CD4-positive, alpha-beta memory T cell (primary cell): ENCODE measurements at regions of chr14 and their contacts with region 1.

Region 1: GRCh38 chr14:24241829-24242443 is 487 bp downstream of the TINF2 start:
- DNase-seq: peak; percentile 96 to 98 (median 97)
- H3K4me3 ChIP-seq: peak overlapping the region; percentile 79 to 81
- H3K4me3 Mint-ChIP-seq: peak overlapping the region; percentile 87 to 99 (median 94)
- H3K27ac ChIP-seq: peak overlapping the region; percentile 96
- H3K27ac Mint-ChIP-seq: peak overlapping the region; percentile 99 to 100 (median 99)
- H3K4me1 ChIP-seq: peaks cover 55% of the 10 kb centered on the region
- H3K4me1 Mint-ChIP-seq: peaks cover 35 to 77% (median 57%) of the 10 kb centered on the region in 4 donors
- H3K27me3 ChIP-seq: no peaks in the 10 kb centered on the region
- H3K27me3 Mint-ChIP-seq: no peaks in the 10 kb centered on the region

Region 2: GRCh38 chr14:24080888-24081738 is 160.8 kb before region 1 on chr14:
- CTCF ChIA-PET with region 1: interaction called, 4 read pairs
- POLR2A ChIA-PET with region 1: interaction called, 10 read pairs
- intact Hi-C with region 1: no loop called
- DNase-seq: peak; percentile 64 to 77 (median 67)
- H3K4me3 ChIP-seq: peak overlapping the region; percentile 39 to 60
- H3K4me3 Mint-ChIP-seq: peak overlapping the region; percentile 81 to 90 (median 87)
- H3K27ac ChIP-seq: peak overlapping the region; percentile 50
- H3K27ac Mint-ChIP-seq: peak overlapping the region; percentile 64 to 92 (median 88)
- H3K4me1 ChIP-seq: peaks cover 14% of the 10 kb centered on the region
- H3K4me1 Mint-ChIP-seq: peaks cover 10 to 27% (median 15%) of the 10 kb centered on the region in 4 donors
- H3K27me3 ChIP-seq: no peaks in the 10 kb centered on the region
- H3K27me3 Mint-ChIP-seq: no peaks in the 10 kb centered on the region

Region 3: GRCh38 chr14:24135834-24136542 is 105.9 kb before region 1 on chr14 and contains the start of gene PSME1:
- CTCF ChIA-PET with region 1: interaction called, 3 read pairs
- POLR2A ChIA-PET with region 1: interaction called, 21 read pairs
- intact Hi-C with region 1: no loop called
- DNase-seq: peak; percentile 92 to 94 (median 93)
- H3K4me3 ChIP-seq: peak within 1 kb of the TSS; percentile 30 to 87
- H3K4me3 Mint-ChIP-seq: peak within 1 kb of the TSS; percentile 87 to 94 (median 92)
- H3K27ac ChIP-seq: peak within 1 kb of the TSS; percentile 84
- H3K27ac Mint-ChIP-seq: peak within 1 kb of the TSS; percentile 88 to 96 (median 94)
- H3K4me1 ChIP-seq: peaks cover 59% of the 10 kb centered on the region
- H3K4me1 Mint-ChIP-seq: peaks cover 35 to 70% (median 55%) of the 10 kb centered on the region in 4 donors
- H3K27me3 ChIP-seq: no peaks in the 10 kb centered on the region
- H3K27me3 Mint-ChIP-seq: no peaks in the 10 kb centered on the region
- total RNA-seq, gene PSME1: 257 to 273 TPM

Region 4: GRCh38 chr14:24195191-24196070 is 46.5 kb before region 1 on chr14 and contains the start of gene TM9SF1:
- CTCF ChIA-PET with region 1: interaction called, 12 read pairs
- POLR2A ChIA-PET with region 1: interaction called, 34 read pairs
- intact Hi-C with region 1: no loop called
- DNase-seq: peak; percentile 89 to 92 (median 92)
- H3K4me3 ChIP-seq: peak within 1 kb of the TSS; percentile 87 to 90
- H3K4me3 Mint-ChIP-seq: peak within 1 kb of the TSS; percentile 93 to 98 (median 94)
- H3K27ac ChIP-seq: peak within 1 kb of the TSS; percentile 98
- H3K27ac Mint-ChIP-seq: peak within 1 kb of the TSS; percentile 92 to 99 (median 98)
- H3K4me1 ChIP-seq: peaks cover 37% of the 10 kb centered on the region
- H3K4me1 Mint-ChIP-seq: peaks cover 31 to 65% (median 48%) of the 10 kb centered on the region in 4 donors
- H3K27me3 ChIP-seq: no peaks in the 10 kb centered on the region
- H3K27me3 Mint-ChIP-seq: no peaks in the 10 kb centered on the region
- total RNA-seq, gene TM9SF1: 24.1 to 26.3 TPM

Region 5: GRCh38 chr14:24279301-24280186 is 37.6 kb after region 1 on chr14:
- CTCF ChIA-PET with region 1: interaction called, 26 read pairs
- POLR2A ChIA-PET with region 1: interaction called, 17 read pairs
- intact Hi-C with region 1: no loop called
- DNase-seq: peak; percentile 46 to 85 (median 51)
- H3K4me3 ChIP-seq: no peak overlapping the region
- H3K4me3 Mint-ChIP-seq: peak overlapping the region in 4 of 8 donors; percentile 43 to 67 (median 46)
- H3K27ac ChIP-seq: peak overlapping the region; percentile 37
- H3K27ac Mint-ChIP-seq: peak overlapping the region; percentile 75 to 95 (median 91)
- H3K4me1 ChIP-seq: peaks cover 23% of the 10 kb centered on the region
- H3K4me1 Mint-ChIP-seq: peaks cover 21 to 44% (median 30%) of the 10 kb centered on the region in 4 donors
- H3K27me3 ChIP-seq: no peaks in the 10 kb centered on the region
- H3K27me3 Mint-ChIP-seq: no peaks in the 10 kb centered on the region

Region 6: GRCh38 chr14:24332268-24332993 is 90.5 kb after region 1 on chr14:
- CTCF ChIA-PET with region 1: interaction called, 49 read pairs
- POLR2A ChIA-PET with region 1: interaction called, 42 read pairs
- intact Hi-C with region 1: loop called (anchors 1 kb)
- DNase-seq: peak; percentile 89 to 92 (median 90)
- H3K4me3 ChIP-seq: peak overlapping the region; percentile 24 to 51
- H3K4me3 Mint-ChIP-seq: peak overlapping the region; percentile 76 to 93 (median 87)
- H3K27ac ChIP-seq: no peak overlapping the region
- H3K27ac Mint-ChIP-seq: peak overlapping the region; percentile 65 to 98 (median 86)
- H3K4me1 ChIP-seq: peaks cover 64% of the 10 kb centered on the region
- H3K4me1 Mint-ChIP-seq: peaks cover 40 to 91% (median 59%) of the 10 kb centered on the region in 4 donors
- H3K27me3 ChIP-seq: peaks cover 11% of the 10 kb centered on the region
- H3K27me3 Mint-ChIP-seq: peaks cover 6 to 13% of the 10 kb centered on the region in 2 donors

Region 7: DNA sequence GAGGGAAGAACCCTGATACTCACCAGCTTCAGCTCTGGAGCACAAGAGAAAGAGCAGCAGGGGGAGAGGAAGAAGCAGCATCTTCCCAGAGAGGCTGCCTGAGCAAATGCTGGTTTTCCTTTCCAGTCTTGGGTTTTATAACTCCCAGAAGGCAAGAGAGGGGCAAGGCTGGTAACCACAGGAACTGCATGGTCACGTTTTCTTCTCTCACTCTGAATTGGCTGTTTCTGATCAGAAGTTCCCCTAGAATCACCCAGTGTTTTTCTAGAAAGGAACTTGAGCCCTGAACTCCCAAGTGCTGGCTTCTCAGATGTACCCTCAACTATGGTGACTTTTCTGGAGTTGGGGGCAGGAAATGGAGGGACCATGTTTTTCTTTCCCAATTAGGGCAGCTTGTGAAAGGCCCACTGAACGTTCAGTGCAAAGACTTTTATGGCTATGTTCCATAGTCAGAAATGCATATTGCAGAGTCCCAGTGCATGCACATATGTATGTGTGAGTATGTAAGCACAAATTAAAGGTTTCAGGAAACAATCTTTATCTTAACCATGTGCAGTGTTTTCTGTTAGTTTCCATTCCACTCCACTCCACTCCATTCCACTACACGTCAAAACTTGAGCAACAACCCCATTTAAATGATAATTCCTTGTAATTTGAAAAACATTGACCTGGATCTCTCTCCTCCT is 266.4 kb after region 1 on chr14 and contains the start of gene CMA1:
- CTCF ChIA-PET with region 1: no interaction called
- POLR2A ChIA-PET with region 1: no interaction called
- intact Hi-C with region 1: no loop called
- DNase-seq: no peak
- H3K4me3 ChIP-seq: no peak within 1 kb of the TSS
- H3K4me3 Mint-ChIP-seq: no peak within 1 kb of the TSS
- H3K27ac ChIP-seq: no peak within 1 kb of the TSS
- H3K27ac Mint-ChIP-seq: peak within 1 kb of the TSS in 1 of 7 donors; percentile 65
- H3K4me1 ChIP-seq: no peaks in the 10 kb centered on the region
- H3K4me1 Mint-ChIP-seq: no peaks in the 10 kb centered on the region
- H3K27me3 ChIP-seq: no peaks in the 10 kb centered on the region
- H3K27me3 Mint-ChIP-seq: peaks cover 13 to 15% of the 10 kb centered on the region in 2 donors
- total RNA-seq, gene CMA1: not detected